Dendritic cell treated with granulocyte-macrophage colony-stimulating factor and Interleukin-4, amounts not matched to agents 40 ng/mL and 50 ng/mL, for 4 days (primary cell): ENCODE measurements at regions of chr9 and their contacts with region 1.

Region 1: GRCh38 chr9:74920944-74921626 is 31.6 kb downstream of the C9orf40 start:
- H3K4me3 Mint-ChIP-seq: no peak overlapping the region
- H3K27ac Mint-ChIP-seq: no peak overlapping the region
- H3K4me1 Mint-ChIP-seq: no peaks in the 10 kb centered on the region
- H3K27me3 Mint-ChIP-seq: no peaks in the 10 kb centered on the region

Region 2: DNA sequence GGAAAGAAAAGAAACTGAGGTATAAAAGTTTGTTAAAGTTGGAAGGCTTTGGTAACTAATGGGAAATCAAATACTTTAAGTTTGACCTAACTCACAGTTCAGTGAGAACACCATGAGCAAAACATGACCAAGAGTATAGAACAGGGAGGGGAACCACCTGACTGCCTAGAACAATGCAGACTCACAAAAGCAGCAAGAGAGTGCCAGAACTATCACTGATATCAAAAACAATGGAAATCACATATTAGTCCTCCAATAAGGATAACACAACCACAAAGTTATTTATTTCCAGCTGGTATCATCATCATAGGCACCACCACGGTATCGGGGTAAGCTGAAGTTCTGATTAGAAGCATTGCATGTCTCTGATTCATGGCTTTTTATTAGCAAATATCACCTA is 110.9 kb before region 1 on chr9:
- intact Hi-C with region 1: loop called (anchors 10 kb)
- H3K4me3 Mint-ChIP-seq: no peak overlapping the region
- H3K27ac Mint-ChIP-seq: no peak overlapping the region
- H3K4me1 Mint-ChIP-seq: no peaks in the 10 kb centered on the region
- H3K27me3 Mint-ChIP-seq: no peaks in the 10 kb centered on the region

Region 3: GRCh38 chr9:74973714-74974113 is 52.6 kb after region 1 on chr9:
- intact Hi-C with region 1: no loop called
- H3K4me3 Mint-ChIP-seq: no peak overlapping the region
- H3K27ac Mint-ChIP-seq: no peak overlapping the region
- H3K4me1 Mint-ChIP-seq: no peaks in the 10 kb centered on the region
- H3K27me3 Mint-ChIP-seq: no peaks in the 10 kb centered on the region